ENCODE measurements at regions of chr20 and their contacts with region 1.

Region 1: GRCh38 chr20:4813863-4814695 is 92.4 kb downstream of the PRND start:
- DNase-seq: no peak
- H3K4me3 ChIP-seq: no peak overlapping the region
- H3K27ac ChIP-seq: no peak overlapping the region
- H3K4me1 ChIP-seq: no peaks in the 10 kb centered on the region
- H3K27me3 ChIP-seq: peaks cover 3% of the 10 kb centered on the region
- CTCF ChIP-seq: no peak

Region 2: GRCh38 chr20:4864311-4864752 is 50.3 kb after region 1 on chr20:
- CTCF ChIA-PET with region 1: no interaction called
- dilution Hi-C with region 1: no loop called
- in situ Hi-C with region 1: no loop called
- intact Hi-C with region 1: no loop called
- DNase-seq: no peak
- H3K4me3 ChIP-seq: no peak overlapping the region
- H3K27ac ChIP-seq: no peak overlapping the region
- H3K4me1 ChIP-seq: peaks cover 3% of the 10 kb centered on the region
- H3K27me3 ChIP-seq: no peaks in the 10 kb centered on the region
- CTCF ChIP-seq: no peak

Region 3: GRCh38 chr20:4880051-4880450 is 66.0 kb after region 1 on chr20:
- CTCF ChIA-PET with region 1: no interaction called
- dilution Hi-C with region 1: no loop called
- in situ Hi-C with region 1: no loop called
- intact Hi-C with region 1: loop called (anchors 2 kb)
- DNase-seq: no peak
- H3K4me3 ChIP-seq: no peak overlapping the region
- H3K27ac ChIP-seq: no peak overlapping the region
- H3K4me1 ChIP-seq: no peaks in the 10 kb centered on the region
- H3K27me3 ChIP-seq: no peaks in the 10 kb centered on the region
- CTCF ChIP-seq: no peak

Region 4: DNA sequence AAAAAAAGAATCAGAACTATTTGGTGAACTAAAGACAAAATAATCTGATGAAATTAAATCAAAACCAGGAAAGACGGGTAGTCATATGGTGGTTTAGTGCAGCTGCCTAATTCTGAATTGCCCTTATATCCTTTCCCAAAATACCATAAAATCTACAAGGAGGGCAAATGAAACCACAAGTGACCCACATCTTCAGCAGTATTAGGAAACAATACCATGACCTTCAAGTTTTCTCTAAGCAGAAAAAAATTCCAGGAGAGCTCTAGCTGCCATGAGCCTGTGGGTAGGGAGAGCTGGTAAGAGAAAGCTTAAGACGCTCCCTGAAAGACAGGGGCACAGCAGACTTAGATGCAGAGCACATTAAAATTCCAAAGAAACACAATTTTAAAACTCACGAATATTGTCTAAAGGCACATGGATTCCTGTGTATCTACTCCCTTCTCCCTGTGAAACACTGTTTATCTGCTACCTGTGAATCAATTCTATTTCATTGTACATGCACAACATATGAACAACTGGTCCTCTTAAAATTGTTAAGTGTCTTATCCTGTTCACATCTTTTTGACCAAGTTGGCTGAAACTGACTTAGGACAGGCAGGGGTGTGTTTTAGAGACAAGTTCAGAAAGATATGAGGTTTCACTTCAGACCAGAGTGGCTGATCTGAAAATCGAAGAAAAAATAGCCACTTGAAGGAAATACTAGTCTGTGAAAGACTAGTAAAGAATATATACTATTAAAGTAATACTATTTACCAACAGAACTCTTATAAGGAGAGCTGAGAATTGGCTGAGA is 782.5 kb after region 1 on chr20:
- CTCF ChIA-PET with region 1: no interaction called
- dilution Hi-C with region 1: no loop called
- in situ Hi-C with region 1: no loop called
- intact Hi-C with region 1: no loop called
- DNase-seq: no peak
- H3K4me3 ChIP-seq: no peak overlapping the region
- H3K27ac ChIP-seq: no peak overlapping the region
- H3K4me1 ChIP-seq: no peaks in the 10 kb centered on the region
- H3K27me3 ChIP-seq: no peaks in the 10 kb centered on the region
- CTCF ChIP-seq: no peak